B cell (primary cell): ENCODE measurements at regions of chrX and their contacts with region 1.

Region 1: DNA sequence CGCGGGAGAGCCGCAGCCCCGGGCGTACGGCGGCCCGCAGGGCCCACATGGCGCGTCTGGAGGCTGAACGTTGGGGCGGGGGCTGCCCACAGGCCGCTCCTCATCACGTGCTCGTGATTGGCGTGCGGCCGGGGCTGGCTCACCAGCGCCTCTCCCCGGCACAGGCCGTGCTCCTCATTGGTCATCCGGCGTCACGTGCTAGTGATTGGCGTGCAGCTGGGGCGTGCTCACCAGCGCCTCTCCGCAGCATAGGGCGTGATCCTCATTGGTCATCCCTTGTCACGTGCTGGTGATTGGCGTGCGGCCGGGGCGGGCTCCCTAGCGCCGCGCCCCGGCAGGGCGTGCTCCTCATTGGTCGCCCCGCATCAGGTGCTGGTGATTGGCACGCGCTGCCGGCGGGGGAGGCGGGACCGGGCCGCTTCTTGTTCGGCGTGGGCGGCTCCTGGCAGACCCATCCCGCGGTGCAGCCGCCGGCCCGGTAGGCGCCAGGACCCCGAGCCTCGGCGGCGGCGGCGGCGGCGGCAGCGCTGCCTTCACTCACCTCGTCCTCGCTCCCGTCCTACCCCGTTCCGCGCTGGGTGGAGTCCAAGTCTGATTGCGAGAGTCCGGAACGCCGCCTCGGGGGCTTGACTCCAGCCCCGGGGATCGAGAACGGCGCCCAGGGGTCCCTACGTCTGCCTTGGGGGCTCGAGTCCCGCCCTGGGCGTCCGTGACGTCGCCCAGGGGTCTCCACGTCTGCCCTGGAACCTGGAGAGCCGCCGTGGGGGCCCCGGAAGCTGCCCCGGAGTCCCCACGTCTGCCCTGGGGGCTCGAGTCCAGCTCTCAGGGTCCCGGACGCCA is at the start of gene GTPBP6:
- DNase-seq: peak; percentile 100
- ATAC-seq: peak; percentile 72
- H3K4me3 ChIP-seq: peak within 1 kb of the TSS; percentile 28 to 98 (median 86)
- H3K4me3 Mint-ChIP-seq: peak within 1 kb of the TSS; percentile 95
- H3K27ac ChIP-seq: peak within 1 kb of the TSS; percentile 95 to 96
- H3K27ac Mint-ChIP-seq: peak within 1 kb of the TSS; percentile 99
- H3K4me1 ChIP-seq: peaks cover 17 to 38% of the 10 kb centered on the region in 2 donors
- H3K4me1 Mint-ChIP-seq: peaks cover 32% of the 10 kb centered on the region
- H3K27me3 ChIP-seq: peaks cover 0 to 13% (median 0%) of the 10 kb centered on the region in 4 experiments
- H3K27me3 Mint-ChIP-seq: peaks cover 3% of the 10 kb centered on the region
- CTCF ChIP-seq: no peak
- total RNA-seq, gene GTPBP6: 69.0 and 72.9 TPM in 2 replicates

Region 2: GRCh38 chrX:283115-283845 is 35.7 kb before region 1 on chrX:
- CTCF ChIA-PET with region 1: no interaction called
- POLR2A ChIA-PET with region 1: no interaction called
- intact Hi-C with region 1: loop called (anchors 2 kb)
- DNase-seq: peak; percentile 91
- ATAC-seq: peak; percentile 98
- H3K4me3 ChIP-seq: peak overlapping the region; percentile 47 to 77 (median 61)
- H3K4me3 Mint-ChIP-seq: peak overlapping the region; percentile 97
- H3K27ac ChIP-seq: peak overlapping the region; percentile 40 to 47
- H3K27ac Mint-ChIP-seq: peak overlapping the region; percentile 91
- H3K4me1 ChIP-seq: peaks cover 0 to 6% of the 10 kb centered on the region in 2 donors
- H3K4me1 Mint-ChIP-seq: peaks cover 21% of the 10 kb centered on the region
- H3K27me3 ChIP-seq: peaks cover 0 to 3% (median 0%) of the 10 kb centered on the region in 4 experiments
- H3K27me3 Mint-ChIP-seq: no peaks in the 10 kb centered on the region
- CTCF ChIP-seq: no peak

Region 3: GRCh38 chrX:386768-387575 is 68.0 kb after region 1 on chrX and contains the start of gene PPP2R3B:
- CTCF ChIA-PET with region 1: no interaction called
- POLR2A ChIA-PET with region 1: no interaction called
- intact Hi-C with region 1: loop called (anchors 1 kb)
- DNase-seq: peak; percentile 100
- ATAC-seq: peak; percentile 88
- H3K4me3 ChIP-seq: peak within 1 kb of the TSS; percentile 82 to 98 (median 91)
- H3K4me3 Mint-ChIP-seq: peak within 1 kb of the TSS; percentile 93
- H3K27ac ChIP-seq: peak within 1 kb of the TSS; percentile 97 to 100
- H3K27ac Mint-ChIP-seq: peak within 1 kb of the TSS; percentile 99
- H3K4me1 ChIP-seq: peaks cover 4 to 14% of the 10 kb centered on the region in 2 donors
- H3K4me1 Mint-ChIP-seq: peaks cover 7% of the 10 kb centered on the region
- H3K27me3 ChIP-seq: no peaks in the 10 kb centered on the region
- H3K27me3 Mint-ChIP-seq: no peaks in the 10 kb centered on the region
- CTCF ChIP-seq: no peak
- total RNA-seq, gene PPP2R3B: 35.2 and 43.3 TPM in 2 replicates

Region 4: GRCh38 chrX:1591102-1591900 is 1272.3 kb after region 1 on chrX and contains the start of gene AKAP17A:
- CTCF ChIA-PET with region 1: no interaction called
- POLR2A ChIA-PET with region 1: no interaction called
- intact Hi-C with region 1: loop called (anchors 5 kb)
- DNase-seq: peak; percentile 97
- ATAC-seq: peak; percentile 88
- H3K4me3 ChIP-seq: peak within 1 kb of the TSS; percentile 55 to 90 (median 78)
- H3K4me3 Mint-ChIP-seq: peak within 1 kb of the TSS; percentile 95
- H3K27ac ChIP-seq: peak within 1 kb of the TSS; percentile 61 to 81
- H3K27ac Mint-ChIP-seq: peak within 1 kb of the TSS; percentile 95
- H3K4me1 ChIP-seq: peaks cover 20 to 47% of the 10 kb centered on the region in 2 donors
- H3K4me1 Mint-ChIP-seq: peaks cover 40% of the 10 kb centered on the region
- H3K27me3 ChIP-seq: no peaks in the 10 kb centered on the region
- H3K27me3 Mint-ChIP-seq: no peaks in the 10 kb centered on the region
- CTCF ChIP-seq: peak; percentile 26
- total RNA-seq, gene AKAP17A: 126 and 129 TPM in 2 replicates